ENCODE measurements at regions of chr7 and their contacts with region 1.

Region 1: GRCh38 chr7:127253281-127254162 is 781 bp upstream of the GRM8 start:
- DNase-seq: peak; percentile 58
- ATAC-seq: peak; percentile 84
- H3K4me3 ChIP-seq: peak overlapping the region; percentile 79
- H3K27ac ChIP-seq: no peak overlapping the region
- H3K4me1 ChIP-seq: peaks cover 13% of the 10 kb centered on the region
- H3K27me3 ChIP-seq: peaks cover 48% of the 10 kb centered on the region
- CTCF ChIP-seq: peak; percentile 83

Region 2: DNA sequence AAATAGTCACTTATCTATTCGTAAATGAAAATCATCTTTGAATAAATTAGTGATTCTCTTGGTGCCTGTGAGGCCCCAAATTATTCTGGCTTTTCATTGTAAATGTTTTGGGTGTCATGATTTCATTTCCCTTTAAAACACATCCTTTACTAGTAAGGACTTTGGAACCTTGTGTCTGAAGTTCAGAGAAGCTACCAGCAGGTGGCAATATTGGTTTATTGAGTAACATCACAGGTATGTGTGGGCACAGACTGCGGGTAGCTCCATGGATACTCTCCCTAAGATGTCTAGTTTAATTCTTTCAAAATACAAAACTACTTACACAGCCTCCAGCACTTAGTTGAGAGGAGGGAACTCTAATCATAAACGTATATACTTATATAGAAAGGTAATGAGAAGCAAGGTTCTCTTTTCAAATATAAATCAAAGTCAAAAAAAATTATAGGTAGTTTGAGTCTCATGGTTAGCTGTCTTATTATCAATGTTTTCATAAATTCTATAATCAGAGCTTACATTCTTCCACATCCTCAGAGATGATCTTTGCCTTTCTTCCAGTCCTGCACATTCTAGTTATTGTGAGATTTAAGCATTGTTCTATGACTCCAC is 450.4 kb before region 1 on chr7:
- CTCF ChIA-PET with region 1: interaction called, 4 read pairs
- POLR2A ChIA-PET with region 1: no interaction called
- intact Hi-C with region 1: loop called (anchors 1 kb)
- DNase-seq: peak; percentile 78
- ATAC-seq: peak; percentile 92
- H3K4me3 ChIP-seq: no peak overlapping the region
- H3K27ac ChIP-seq: no peak overlapping the region
- H3K4me1 ChIP-seq: no peaks in the 10 kb centered on the region
- H3K27me3 ChIP-seq: no peaks in the 10 kb centered on the region
- CTCF ChIP-seq: peak; percentile 82

Region 3: DNA sequence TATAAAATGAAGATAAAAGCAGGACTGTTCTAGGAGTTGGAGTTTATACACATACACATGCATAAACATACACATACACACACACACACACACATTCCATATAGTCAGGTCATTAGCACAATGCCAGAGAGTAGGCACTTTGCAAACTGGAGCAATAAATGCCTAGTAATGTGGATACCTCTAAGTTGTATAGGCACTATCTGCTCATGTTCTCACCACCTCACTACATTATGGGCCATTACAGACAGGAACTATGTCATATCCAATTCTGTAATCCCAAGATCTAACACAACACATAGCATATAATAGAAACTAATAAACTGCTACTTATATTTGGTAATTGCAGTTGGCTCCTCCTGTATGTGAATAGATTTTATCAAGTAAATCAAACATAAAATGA is 116.4 kb before region 1 on chr7:
- CTCF ChIA-PET with region 1: no interaction called
- POLR2A ChIA-PET with region 1: no interaction called
- intact Hi-C with region 1: no loop called
- DNase-seq: no peak
- ATAC-seq: no peak
- H3K4me3 ChIP-seq: no peak overlapping the region
- H3K27ac ChIP-seq: no peak overlapping the region
- H3K4me1 ChIP-seq: no peaks in the 10 kb centered on the region
- H3K27me3 ChIP-seq: no peaks in the 10 kb centered on the region
- CTCF ChIP-seq: no peak

Region 4: GRCh38 chr7:127392566-127393367 is 139.2 kb after region 1 on chr7 and contains the start of gene ZNF800:
- CTCF ChIA-PET with region 1: no interaction called
- POLR2A ChIA-PET with region 1: interaction called, 4 read pairs
- intact Hi-C with region 1: loop called (anchors 5 kb)
- DNase-seq: peak; percentile 77
- ATAC-seq: peak; percentile 88
- H3K4me3 ChIP-seq: peak within 1 kb of the TSS; percentile 99
- H3K27ac ChIP-seq: peak within 1 kb of the TSS; percentile 63
- H3K4me1 ChIP-seq: peaks cover 21% of the 10 kb centered on the region
- H3K27me3 ChIP-seq: no peaks in the 10 kb centered on the region
- CTCF ChIP-seq: no peak
- total RNA-seq, gene ZNF800: 13.2 and 18.5 TPM in 2 replicates

Region 5: DNA sequence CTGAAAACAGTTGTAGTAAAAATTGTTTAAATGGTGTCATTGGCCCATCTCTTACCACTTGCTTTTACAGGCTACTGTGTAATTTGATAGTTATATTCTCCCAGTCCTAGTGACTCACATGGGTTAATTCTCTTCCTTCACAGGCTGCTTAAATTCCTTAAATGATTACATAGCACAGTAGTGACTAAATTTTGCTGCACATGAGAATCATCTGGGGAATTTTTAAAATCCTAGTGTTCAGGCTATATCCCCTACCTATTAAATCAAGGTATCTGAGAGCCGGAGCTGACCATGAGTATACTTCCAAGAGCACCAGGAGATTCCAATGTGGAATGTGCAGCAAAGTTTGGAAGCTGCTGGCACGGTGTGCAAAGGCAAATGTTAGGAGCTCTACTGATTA is 184.3 kb after region 1 on chr7:
- CTCF ChIA-PET with region 1: no interaction called
- POLR2A ChIA-PET with region 1: no interaction called
- intact Hi-C with region 1: loop called (anchors 5 kb)
- DNase-seq: peak; percentile 81
- ATAC-seq: peak; percentile 99
- H3K4me3 ChIP-seq: no peak overlapping the region
- H3K27ac ChIP-seq: no peak overlapping the region
- H3K4me1 ChIP-seq: peaks cover 19% of the 10 kb centered on the region
- H3K27me3 ChIP-seq: no peaks in the 10 kb centered on the region
- CTCF ChIP-seq: no peak

Measured in PC-3 (cell line).